Activated B cell treated with CpG ODN at 0.5 μM for 24 hours (primary cell): ENCODE measurements at regions of chr15 and their contacts with region 1.

Region 1: DNA sequence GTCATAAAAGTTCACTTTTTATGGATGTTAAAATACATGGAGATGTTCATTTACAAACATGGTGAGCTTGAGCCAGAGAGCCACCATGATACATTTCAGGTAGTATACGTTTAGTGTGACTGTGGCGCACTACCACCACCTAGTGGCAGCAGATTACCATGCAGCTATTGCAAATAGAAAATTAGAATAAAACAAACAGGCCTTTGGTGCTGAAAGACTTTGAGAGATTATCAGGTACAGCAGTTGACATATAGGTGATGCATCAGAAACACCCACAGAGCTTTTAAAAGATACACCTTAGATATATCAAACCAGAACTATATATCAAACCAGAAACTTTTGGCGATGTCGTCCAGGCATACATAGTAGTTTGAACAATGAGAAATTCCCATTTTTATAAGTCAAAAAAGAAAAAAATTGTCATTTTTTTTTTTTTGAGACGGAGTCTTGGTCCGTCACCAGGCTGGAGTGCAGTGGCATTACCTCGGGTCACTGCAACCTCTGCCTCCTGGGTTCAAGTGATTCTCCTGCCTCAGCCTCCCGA is 42.0 kb upstream of the ICE2 start:
- DNase-seq: peak; percentile 51
- ATAC-seq: peak; percentile 95
- H3K4me3 Mint-ChIP-seq: peak overlapping the region; percentile 17
- H3K27ac Mint-ChIP-seq: no peak overlapping the region
- H3K4me1 Mint-ChIP-seq: peaks cover 12% of the 10 kb centered on the region
- H3K27me3 Mint-ChIP-seq: no peaks in the 10 kb centered on the region
- CTCF ChIP-seq: peak; percentile 100

Region 2: DNA sequence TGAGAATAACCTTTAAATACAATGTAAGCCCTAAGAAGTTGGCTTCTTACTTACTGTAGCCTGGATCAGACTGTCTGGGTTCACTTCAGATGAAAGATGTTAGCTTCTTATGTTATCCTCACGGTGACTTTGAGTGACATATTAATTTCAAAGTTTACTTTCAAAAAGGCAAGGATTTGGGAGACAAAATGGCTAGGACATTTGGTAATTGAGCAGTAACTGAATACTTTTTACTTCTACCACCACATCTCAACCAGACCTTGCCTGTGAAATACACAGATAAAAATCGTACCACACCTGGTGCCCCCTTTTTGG is 795.8 kb before region 1 on chr15:
- CTCF ChIA-PET with region 1: interaction called, 7 read pairs
- POLR2A ChIA-PET with region 1: no interaction called
- intact Hi-C with region 1: loop called (anchors 1 kb)
- DNase-seq: no peak
- ATAC-seq: no peak
- H3K4me3 Mint-ChIP-seq: no peak overlapping the region
- H3K27ac Mint-ChIP-seq: no peak overlapping the region
- H3K4me1 Mint-ChIP-seq: no peaks in the 10 kb centered on the region
- H3K27me3 Mint-ChIP-seq: peaks cover 18% of the 10 kb centered on the region
- CTCF ChIP-seq: no peak

Region 3: GRCh38 chr15:59917504-59918157 is 603.3 kb before region 1 on chr15:
- CTCF ChIA-PET with region 1: interaction called, 4 read pairs
- POLR2A ChIA-PET with region 1: no interaction called
- intact Hi-C with region 1: loop called (anchors 5 kb)
- DNase-seq: peak; percentile 17
- ATAC-seq: peak; percentile 62
- H3K4me3 Mint-ChIP-seq: no peak overlapping the region
- H3K27ac Mint-ChIP-seq: no peak overlapping the region
- H3K4me1 Mint-ChIP-seq: no peaks in the 10 kb centered on the region
- H3K27me3 Mint-ChIP-seq: peaks cover 3% of the 10 kb centered on the region
- CTCF ChIP-seq: no peak

Region 4: GRCh38 chr15:60326824-60327654 is 193.9 kb before region 1 on chr15:
- CTCF ChIA-PET with region 1: interaction called, 14 read pairs
- POLR2A ChIA-PET with region 1: no interaction called
- intact Hi-C with region 1: loop called (anchors 1 kb)
- DNase-seq: no peak
- ATAC-seq: peak; percentile 37
- H3K4me3 Mint-ChIP-seq: no peak overlapping the region
- H3K27ac Mint-ChIP-seq: no peak overlapping the region
- H3K4me1 Mint-ChIP-seq: peaks cover 4% of the 10 kb centered on the region
- H3K27me3 Mint-ChIP-seq: peaks cover 35% of the 10 kb centered on the region
- CTCF ChIP-seq: no peak

Region 5: GRCh38 chr15:60362321-60363086 is 158.4 kb before region 1 on chr15:
- CTCF ChIA-PET with region 1: interaction called, 140 read pairs
- POLR2A ChIA-PET with region 1: interaction called, 3 read pairs
- intact Hi-C with region 1: loop called (anchors 1 kb)
- DNase-seq: no peak
- ATAC-seq: no peak
- H3K4me3 Mint-ChIP-seq: no peak overlapping the region
- H3K27ac Mint-ChIP-seq: no peak overlapping the region
- H3K4me1 Mint-ChIP-seq: peaks cover 3% of the 10 kb centered on the region
- H3K27me3 Mint-ChIP-seq: no peaks in the 10 kb centered on the region
- CTCF ChIP-seq: no peak

Region 6: DNA sequence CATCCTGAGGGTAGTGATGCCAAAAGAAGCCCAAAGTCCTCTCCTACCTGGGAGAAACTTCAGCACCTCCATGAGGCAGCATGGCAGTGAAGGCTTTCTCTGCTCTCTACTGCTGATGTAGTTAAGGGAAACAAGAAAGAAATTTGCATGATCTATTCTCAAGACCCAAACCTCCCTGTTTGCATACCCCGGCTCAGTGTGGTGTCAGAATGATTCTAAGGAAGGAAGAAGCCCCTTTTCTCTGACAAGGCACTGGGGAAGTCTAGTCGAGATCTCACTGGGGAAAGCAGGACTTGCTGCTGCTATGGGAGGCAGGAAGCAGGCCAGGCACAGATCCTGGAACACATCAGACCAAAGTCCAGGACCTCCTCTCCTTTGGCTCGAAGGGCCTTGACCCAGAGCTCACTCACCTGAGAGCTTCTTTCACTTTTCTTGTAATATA is 47.4 kb after region 1 on chr15:
- CTCF ChIA-PET with region 1: no interaction called
- POLR2A ChIA-PET with region 1: no interaction called
- intact Hi-C with region 1: loop called (anchors 5 kb)
- DNase-seq: no peak
- ATAC-seq: peak; percentile 89
- H3K4me3 Mint-ChIP-seq: peak overlapping the region; percentile 50
- H3K27ac Mint-ChIP-seq: peak overlapping the region; percentile 86
- H3K4me1 Mint-ChIP-seq: peaks cover 31% of the 10 kb centered on the region
- H3K27me3 Mint-ChIP-seq: no peaks in the 10 kb centered on the region
- CTCF ChIP-seq: no peak

Region 7: GRCh38 chr15:60819860-60820259 is 299.0 kb after region 1 on chr15:
- CTCF ChIA-PET with region 1: no interaction called
- POLR2A ChIA-PET with region 1: no interaction called
- intact Hi-C with region 1: no loop called
- DNase-seq: no peak
- ATAC-seq: no peak
- H3K4me3 Mint-ChIP-seq: no peak overlapping the region
- H3K27ac Mint-ChIP-seq: no peak overlapping the region
- H3K4me1 Mint-ChIP-seq: no peaks in the 10 kb centered on the region
- H3K27me3 Mint-ChIP-seq: peaks cover 5% of the 10 kb centered on the region
- CTCF ChIP-seq: no peak